Breast epithelium (tissue), 4 donors: ENCODE measurements at regions of chr1 and their contacts with region 1.

Region 1: GRCh38 chr1:1122078-1122811 is 6.4 kb upstream of the C1orf159 start:
- DNase-seq: peak; percentile 69 to 89
- H3K4me3 ChIP-seq: peak overlapping the region in 2 of 3 donors; percentile 40 to 57
- H3K27ac ChIP-seq: no peak overlapping the region
- H3K4me1 ChIP-seq: peaks cover 0 to 11% of the 10 kb centered on the region in 2 donors
- H3K27me3 ChIP-seq: no peaks in the 10 kb centered on the region
- CTCF ChIP-seq: peak; percentile 84 to 97 (median 91)
- POLR2A ChIP-seq: no peak

Region 2: GRCh38 chr1:1041092-1041503 is 81.1 kb before region 1 on chr1:
- intact Hi-C with region 1: no loop called
- DNase-seq: no peak
- H3K4me3 ChIP-seq: peak overlapping the region in 1 of 3 donors; percentile 66
- H3K27ac ChIP-seq: no peak overlapping the region
- H3K4me1 ChIP-seq: peaks cover 7 to 8% of the 10 kb centered on the region in 2 donors
- H3K27me3 ChIP-seq: no peaks in the 10 kb centered on the region
- CTCF ChIP-seq: no peak
- POLR2A ChIP-seq: no peak

Region 3: DNA sequence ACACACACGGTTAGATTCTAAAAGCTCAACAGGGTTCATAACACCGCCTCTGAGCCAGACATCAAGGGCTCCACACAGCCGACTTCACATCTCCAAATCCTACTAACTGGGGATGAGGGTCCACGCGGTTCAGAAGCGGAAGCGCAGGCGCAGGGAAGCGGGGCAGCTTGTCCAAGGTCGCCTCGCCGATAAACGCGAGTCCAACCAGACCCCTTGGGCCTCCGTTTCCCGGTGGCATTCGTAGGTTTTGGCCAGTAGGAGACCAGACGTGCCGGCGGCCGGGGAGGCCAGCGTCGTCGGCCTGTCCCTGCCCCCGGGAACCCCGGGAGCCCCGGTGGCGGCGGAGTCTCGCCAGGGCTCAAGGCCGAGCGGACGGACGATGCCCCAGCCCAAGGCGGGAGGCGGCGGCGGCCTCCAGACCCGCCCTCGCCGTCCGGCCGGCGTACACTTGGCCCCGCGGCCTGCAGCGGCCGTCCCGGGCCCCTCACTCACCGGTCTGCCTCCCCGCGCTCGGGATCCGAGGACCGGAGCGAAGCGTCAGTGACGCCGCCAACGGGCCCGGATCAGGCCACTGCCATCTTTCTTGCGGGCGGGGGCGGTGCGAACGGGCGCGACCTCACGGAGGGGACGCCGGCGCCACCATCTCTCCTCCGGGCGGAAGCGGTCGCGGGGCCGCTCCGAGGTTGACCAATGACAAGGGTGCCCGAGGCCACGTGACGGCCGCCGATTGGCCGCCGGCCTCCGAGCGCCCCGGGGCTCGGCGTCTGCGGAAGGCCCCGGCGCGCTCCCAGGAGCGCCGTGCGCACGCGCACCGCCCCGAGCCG is 109.4 kb after region 1 on chr1 and contains the start of gene SDF4:
- intact Hi-C with region 1: loop called (anchors 10 kb)
- DNase-seq: peak; percentile 97
- H3K4me3 ChIP-seq: peak within 1 kb of the TSS; percentile 88 to 99 (median 98)
- H3K27ac ChIP-seq: peak within 1 kb of the TSS; percentile 89 to 91
- H3K4me1 ChIP-seq: peaks cover 11 to 19% of the 10 kb centered on the region in 2 donors
- H3K27me3 ChIP-seq: no peaks in the 10 kb centered on the region
- CTCF ChIP-seq: peak in 1 of 3 donors; percentile 7
- POLR2A ChIP-seq: no peak
- total RNA-seq, gene SDF4: 58.0 to 111 (median 79.3) TPM

Region 4: DNA sequence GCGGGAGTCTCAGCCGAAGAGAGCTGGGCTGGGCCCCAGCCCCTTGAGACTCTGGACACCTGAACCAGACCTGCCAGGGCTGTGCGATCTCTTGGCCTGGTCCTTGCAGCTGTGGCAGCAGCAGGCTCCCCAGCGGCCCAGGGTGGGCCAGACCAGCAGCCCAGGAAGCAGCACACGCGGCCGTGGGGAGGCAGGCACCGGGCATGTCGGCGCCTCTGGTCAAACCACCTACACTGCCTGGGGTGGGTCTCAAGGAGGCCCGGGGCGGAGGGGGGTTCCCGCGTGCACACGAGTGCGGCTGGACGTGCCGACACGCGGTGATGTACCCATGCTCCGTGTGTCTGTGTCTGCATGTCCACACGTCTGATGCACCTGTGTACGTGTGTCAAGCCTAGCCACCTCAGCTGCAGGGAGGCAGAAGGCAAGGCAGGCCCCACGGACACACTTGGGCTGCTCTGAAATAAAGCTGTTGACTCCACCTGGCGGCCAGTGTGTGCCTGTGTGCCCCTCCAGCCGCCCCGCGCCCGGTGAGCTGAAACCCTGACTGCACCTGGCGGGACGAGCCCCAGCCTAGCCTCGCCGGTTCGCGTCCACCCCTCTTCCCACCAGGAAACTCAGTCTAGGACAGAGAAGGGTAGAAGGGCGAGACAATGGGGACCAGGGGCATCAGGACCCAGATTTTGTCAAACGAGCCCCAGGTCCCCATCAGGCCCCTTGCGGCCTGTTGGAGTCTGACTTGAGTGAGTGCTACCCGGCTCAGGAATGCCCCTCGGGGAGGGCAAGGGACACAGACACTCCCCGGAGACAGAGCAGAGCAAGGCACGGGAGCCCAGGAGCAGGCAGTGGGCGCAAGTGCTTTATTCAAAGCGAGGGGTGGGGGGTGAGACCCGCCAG is 169.6 kb after region 1 on chr1:
- intact Hi-C with region 1: loop called (anchors 5 kb)
- DNase-seq: peak; percentile 77 to 80
- H3K4me3 ChIP-seq: no peak overlapping the region
- H3K27ac ChIP-seq: no peak overlapping the region
- H3K4me1 ChIP-seq: peaks cover 0 to 10% of the 10 kb centered on the region in 2 donors
- H3K27me3 ChIP-seq: peaks cover 0 to 11% of the 10 kb centered on the region in 2 donors
- CTCF ChIP-seq: peak; percentile 62 to 87 (median 86)
- POLR2A ChIP-seq: no peak